Tibial artery (tissue), 4 donors: ENCODE measurements at regions of chr12 and their contacts with region 1.

Region 1: GRCh38 chr12:89524541-89525285 is at the start of gene GALNT4:
- DNase-seq: peak; percentile 90 to 92
- H3K4me3 ChIP-seq: peak within 1 kb of the TSS; percentile 89 to 99
- H3K27ac ChIP-seq: peak within 1 kb of the TSS; percentile 89 to 99
- H3K4me1 ChIP-seq: peaks cover 0 to 47% (median 27%) of the 10 kb centered on the region in 4 donors
- H3K27me3 ChIP-seq: no peaks in the 10 kb centered on the region
- CTCF ChIP-seq: peak; percentile 62 to 70

Region 2: DNA sequence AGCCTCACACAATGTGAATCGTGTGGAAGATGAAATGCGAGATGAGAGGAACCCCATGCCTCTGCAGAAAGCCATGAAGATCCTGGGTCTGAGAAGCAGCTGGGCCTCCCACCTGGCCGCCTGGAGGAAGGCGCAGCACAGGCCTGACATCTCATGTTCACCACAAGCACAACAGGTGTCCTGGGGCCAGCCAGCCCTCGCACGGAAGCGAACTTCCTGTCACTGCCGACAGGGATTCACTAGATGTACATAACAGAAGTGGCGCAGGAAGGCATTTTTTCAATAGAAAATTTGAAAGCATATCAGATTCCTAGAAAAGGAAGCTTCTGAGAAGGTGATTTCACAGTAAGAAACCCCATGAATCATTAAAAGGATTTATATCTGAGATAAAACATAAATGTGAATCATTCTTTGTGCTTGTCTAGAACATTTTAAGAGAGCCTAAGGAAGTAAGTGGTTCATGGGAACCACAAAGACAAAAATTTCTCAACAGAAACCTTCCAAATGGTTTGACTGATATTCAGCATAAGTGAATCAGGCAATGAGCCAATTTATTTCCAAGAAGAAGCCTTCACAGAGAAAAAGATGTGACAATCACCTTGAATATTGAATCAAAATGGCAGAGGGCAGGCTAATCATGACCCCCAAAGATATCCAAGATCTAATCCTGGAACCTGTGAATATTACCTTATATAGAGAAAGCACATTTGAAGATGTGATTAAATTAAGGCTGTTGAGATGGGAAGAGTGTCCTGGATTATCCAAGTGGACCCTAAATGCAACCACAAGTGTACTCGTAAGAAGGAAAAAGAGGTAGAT is 484.4 kb before region 1 on chr12:
- intact Hi-C with region 1: loop called (anchors 10 kb)
- DNase-seq: no peak
- H3K4me3 ChIP-seq: no peak overlapping the region
- H3K27ac ChIP-seq: no peak overlapping the region
- H3K4me1 ChIP-seq: no peaks in the 10 kb centered on the region
- H3K27me3 ChIP-seq: no peaks in the 10 kb centered on the region
- CTCF ChIP-seq: no peak

Region 3: DNA sequence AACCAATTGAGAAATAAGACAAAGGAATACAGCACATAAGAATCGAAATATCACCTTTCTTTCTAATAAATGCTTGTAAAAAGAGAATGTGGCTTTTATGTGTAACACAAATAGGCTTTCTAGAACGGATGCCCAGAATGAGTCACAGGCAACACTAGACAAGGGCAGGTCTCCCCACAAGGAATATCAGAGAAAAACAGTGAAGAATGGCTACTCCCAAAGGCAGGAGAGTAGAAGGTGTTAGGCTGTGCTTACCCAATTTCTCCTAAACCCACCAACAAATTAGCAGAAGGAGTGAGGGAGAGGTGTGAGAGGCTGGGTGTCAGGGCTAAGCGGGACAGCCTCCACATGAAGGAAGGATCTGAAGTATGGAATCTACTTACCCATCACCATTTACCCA is 55.4 kb before region 1 on chr12:
- intact Hi-C with region 1: loop called (anchors 5 kb)
- DNase-seq: no peak
- H3K4me3 ChIP-seq: no peak overlapping the region
- H3K27ac ChIP-seq: no peak overlapping the region
- H3K4me1 ChIP-seq: no peaks in the 10 kb centered on the region
- H3K27me3 ChIP-seq: no peaks in the 10 kb centered on the region
- CTCF ChIP-seq: no peak

Region 4: GRCh38 chr12:89593873-89594272 is 69.2 kb after region 1 on chr12:
- intact Hi-C with region 1: no loop called
- DNase-seq: no peak
- H3K4me3 ChIP-seq: no peak overlapping the region
- H3K27ac ChIP-seq: no peak overlapping the region
- H3K4me1 ChIP-seq: no peaks in the 10 kb centered on the region
- H3K27me3 ChIP-seq: no peaks in the 10 kb centered on the region
- CTCF ChIP-seq: no peak